HCT116 (cell line): ENCODE measurements at regions of chr17 and their contacts with region 1.

Region 1: GRCh38 chr17:34321964-34322363 is 2.7 kb downstream of the CCL8 start:
- DNase-seq: no peak
- ATAC-seq: no peak
- H3K4me3 ChIP-seq: no peak overlapping the region
- H3K27ac ChIP-seq: no peak overlapping the region
- H3K4me1 ChIP-seq: no peaks in the 10 kb centered on the region
- H3K27me3 ChIP-seq: no peaks in the 10 kb centered on the region
- CTCF ChIP-seq: no peak
- POLR2A ChIP-seq: no peak
- RAD21 ChIP-seq: no peak

Region 2: DNA sequence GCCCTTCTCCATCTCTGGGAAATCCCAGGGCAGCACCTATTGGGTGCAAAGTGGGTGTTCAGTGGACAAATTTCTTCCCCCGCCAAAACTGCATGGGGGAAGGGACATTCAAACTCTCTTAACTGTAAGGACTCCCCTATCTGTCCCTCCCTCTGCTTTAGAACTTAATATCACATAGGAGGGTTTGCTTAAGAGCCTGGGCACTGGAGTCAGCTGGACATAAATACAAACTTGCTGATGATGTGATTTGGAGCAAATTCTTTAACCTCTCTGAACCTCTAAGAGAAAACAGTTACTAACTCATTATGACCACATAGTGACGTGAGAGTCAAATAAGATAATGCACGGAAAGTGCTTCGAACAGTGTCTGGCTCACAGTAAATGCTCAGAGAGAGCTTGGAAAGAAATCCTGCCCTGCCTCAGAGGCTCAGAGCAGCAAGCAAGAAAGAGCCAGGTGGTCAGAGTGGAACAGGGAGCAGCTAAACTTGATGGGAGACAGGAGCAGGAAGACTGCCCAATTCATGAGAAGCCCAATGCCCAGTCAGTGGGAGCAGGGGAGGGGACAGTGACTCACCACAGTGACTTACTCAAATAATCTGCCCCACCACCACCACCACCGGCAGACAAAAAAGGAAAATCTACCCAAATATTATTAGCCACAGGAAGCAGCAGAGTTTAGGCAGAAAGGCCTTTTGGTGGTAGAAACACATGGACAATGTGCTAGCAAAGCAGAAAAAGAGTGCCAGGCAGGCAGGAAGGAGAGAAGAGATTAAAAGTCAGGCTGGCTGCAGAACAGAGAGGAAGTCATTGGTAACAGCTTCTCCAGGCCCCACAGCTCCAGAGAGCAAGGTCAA is 65.0 kb after region 1 on chr17:
- CTCF ChIA-PET with region 1: no interaction called
- POLR2A ChIA-PET with region 1: no interaction called
- RAD21 ChIA-PET with region 1: no interaction called
- intact Hi-C with region 1: loop called (anchors 10 kb)
- DNase-seq: no peak
- ATAC-seq: no peak
- H3K4me3 ChIP-seq: no peak overlapping the region
- H3K27ac ChIP-seq: no peak overlapping the region
- H3K4me1 ChIP-seq: no peaks in the 10 kb centered on the region
- H3K27me3 ChIP-seq: peaks cover 52% of the 10 kb centered on the region
- CTCF ChIP-seq: no peak
- POLR2A ChIP-seq: no peak
- RAD21 ChIP-seq: no peak